Activated CD4-positive, alpha-beta T cell treated with anti-CD3 and anti-CD28 coated beads, Interleukin-2, amount 10 ng/mL, durations not matched to agents 7 days and 5 days (primary cell): ENCODE measurements at regions of chr3 and their contacts with region 1.

Region 1: GRCh38 chr3:11641683-11642430 is 1.9 kb downstream of the VGLL4 start:
- DNase-seq: peak; percentile 37
- H3K4me3 Mint-ChIP-seq: peak overlapping the region; percentile 94
- H3K27ac Mint-ChIP-seq: peak overlapping the region; percentile 98
- H3K4me1 Mint-ChIP-seq: peaks cover 46% of the 10 kb centered on the region
- H3K27me3 Mint-ChIP-seq: no peaks in the 10 kb centered on the region

Region 2: GRCh38 chr3:11509173-11510000 is 132.5 kb before region 1 on chr3:
- CTCF ChIA-PET with region 1: no interaction called
- POLR2A ChIA-PET with region 1: no interaction called
- DNase-seq: no peak
- H3K4me3 Mint-ChIP-seq: no peak overlapping the region
- H3K27ac Mint-ChIP-seq: no peak overlapping the region
- H3K4me1 Mint-ChIP-seq: peaks cover 10% of the 10 kb centered on the region
- H3K27me3 Mint-ChIP-seq: no peaks in the 10 kb centered on the region

Region 3: DNA sequence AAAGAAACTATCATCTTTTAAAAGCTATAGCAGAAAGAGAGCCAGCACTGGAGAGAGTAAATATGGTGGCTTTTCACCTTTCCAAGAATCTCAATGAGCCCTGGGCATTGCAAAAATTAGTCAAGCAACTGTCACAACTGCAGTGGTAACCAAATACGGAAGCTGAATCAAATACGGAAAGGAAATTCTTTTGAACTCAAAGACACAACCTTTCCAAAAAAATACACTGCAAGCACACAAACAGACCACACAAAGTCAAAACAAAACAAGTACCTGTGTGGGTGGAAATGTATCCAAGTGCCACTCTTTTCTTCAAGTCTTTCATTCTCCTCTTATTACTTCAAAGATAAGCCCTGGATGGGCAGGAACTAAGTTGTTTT is 15.8 kb before region 1 on chr3:
- CTCF ChIA-PET with region 1: interaction called, 31 read pairs
- POLR2A ChIA-PET with region 1: interaction called, 3 read pairs
- DNase-seq: peak; percentile 15
- H3K4me3 Mint-ChIP-seq: peak overlapping the region; percentile 0
- H3K27ac Mint-ChIP-seq: peak overlapping the region; percentile 95
- H3K4me1 Mint-ChIP-seq: peaks cover 65% of the 10 kb centered on the region
- H3K27me3 Mint-ChIP-seq: no peaks in the 10 kb centered on the region

Region 4: GRCh38 chr3:13045904-13046568 is 1404.2 kb after region 1 on chr3:
- CTCF ChIA-PET with region 1: no interaction called
- POLR2A ChIA-PET with region 1: no interaction called
- DNase-seq: peak; percentile 21
- H3K4me3 Mint-ChIP-seq: no peak overlapping the region
- H3K27ac Mint-ChIP-seq: peak overlapping the region; percentile 2
- H3K4me1 Mint-ChIP-seq: peaks cover 15% of the 10 kb centered on the region
- H3K27me3 Mint-ChIP-seq: no peaks in the 10 kb centered on the region